ENCODE measurements at regions of chr3 and their contacts with region 1.

Region 1: GRCh38 chr3:56988458-56989168 is 71.9 kb upstream of the SPATA12 start:
- DNase-seq: peak in 1 of 2 experiments; percentile 50
- H3K4me3 ChIP-seq: no peak overlapping the region
- H3K27ac ChIP-seq: no peak overlapping the region
- H3K4me1 ChIP-seq: no peaks in the 10 kb centered on the region
- H3K27me3 ChIP-seq: no peaks in the 10 kb centered on the region
- CTCF ChIP-seq: peak; percentile 88

Region 2: GRCh38 chr3:56494686-56495322 is 493.8 kb before region 1 on chr3:
- CTCF ChIA-PET with region 1: no interaction called
- POLR2A ChIA-PET with region 1: no interaction called
- intact Hi-C with region 1: loop called (anchors 10 kb)
- DNase-seq: peak; percentile 55 to 57
- H3K4me3 ChIP-seq: no peak overlapping the region
- H3K27ac ChIP-seq: no peak overlapping the region
- H3K4me1 ChIP-seq: no peaks in the 10 kb centered on the region
- H3K27me3 ChIP-seq: peaks cover 32% of the 10 kb centered on the region
- CTCF ChIP-seq: peak; percentile 88

Region 3: GRCh38 chr3:56855856-56856512 is 132.6 kb before region 1 on chr3:
- CTCF ChIA-PET with region 1: no interaction called
- POLR2A ChIA-PET with region 1: no interaction called
- intact Hi-C with region 1: loop called (anchors 10 kb)
- DNase-seq: no peak
- H3K4me3 ChIP-seq: no peak overlapping the region
- H3K27ac ChIP-seq: no peak overlapping the region
- H3K4me1 ChIP-seq: peaks cover 33% of the 10 kb centered on the region
- H3K27me3 ChIP-seq: no peaks in the 10 kb centered on the region
- CTCF ChIP-seq: peak; percentile 60

Measured in PC-9 (cell line).